ENCODE measurements at regions of chr18 and their contacts with region 1.

Region 1: DNA sequence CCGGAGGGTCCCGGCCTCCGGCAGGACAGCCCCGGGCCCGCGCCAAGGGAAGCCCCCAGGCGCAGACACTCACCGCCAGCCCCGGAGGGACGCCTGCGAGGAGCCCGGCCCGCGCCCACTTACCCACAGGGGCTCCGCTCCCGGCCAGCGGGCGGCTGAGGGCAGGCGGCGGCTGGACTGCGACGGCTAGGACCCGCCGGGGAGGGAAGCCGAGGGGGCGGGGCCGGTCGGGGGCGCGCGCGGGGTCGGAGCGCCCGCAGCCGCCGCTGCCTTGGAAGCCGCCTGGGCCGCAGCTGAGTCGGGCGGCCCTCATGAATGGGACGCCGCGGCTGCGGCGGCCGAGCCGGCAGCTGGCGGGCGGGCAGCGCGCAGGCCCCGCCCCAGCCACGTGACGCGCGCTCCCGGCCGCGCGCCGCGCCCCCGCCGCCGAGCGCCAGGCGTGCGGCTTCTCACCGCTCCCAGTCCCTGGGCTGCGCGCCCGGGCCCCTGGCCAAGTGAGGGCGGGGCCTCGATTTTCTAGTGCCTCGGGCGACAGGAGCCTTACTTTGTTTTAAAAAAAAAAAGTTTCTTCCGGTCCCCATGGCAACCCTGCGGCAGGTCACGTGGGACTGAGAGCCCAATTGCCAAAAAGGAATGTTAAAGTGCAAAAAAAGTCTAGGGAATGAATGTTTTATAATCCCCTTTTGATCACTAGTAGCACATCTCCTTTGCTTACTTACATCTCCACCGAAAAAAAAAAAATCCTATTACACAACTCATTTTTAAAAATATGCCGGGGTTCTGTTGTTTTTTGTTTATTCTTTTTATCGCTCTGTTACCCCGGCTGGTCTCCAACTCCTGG is at the start of gene LPIN2:
- DNase-seq: peak; percentile 91 to 97 (median 95)
- H3K4me3 ChIP-seq: peak within 1 kb of the TSS; percentile 54 to 94 (median 81)
- H3K27ac ChIP-seq: peak within 1 kb of the TSS; percentile 29 to 99 (median 92)
- H3K27me3 ChIP-seq: no peaks in the 10 kb centered on the region
- CTCF ChIP-seq: peak in 4 of 56 donors; percentile 3 to 28 (median 13)
- total RNA-seq, gene LPIN2: 37.1 to 95.3 (median 57.4) TPM

Region 2: DNA sequence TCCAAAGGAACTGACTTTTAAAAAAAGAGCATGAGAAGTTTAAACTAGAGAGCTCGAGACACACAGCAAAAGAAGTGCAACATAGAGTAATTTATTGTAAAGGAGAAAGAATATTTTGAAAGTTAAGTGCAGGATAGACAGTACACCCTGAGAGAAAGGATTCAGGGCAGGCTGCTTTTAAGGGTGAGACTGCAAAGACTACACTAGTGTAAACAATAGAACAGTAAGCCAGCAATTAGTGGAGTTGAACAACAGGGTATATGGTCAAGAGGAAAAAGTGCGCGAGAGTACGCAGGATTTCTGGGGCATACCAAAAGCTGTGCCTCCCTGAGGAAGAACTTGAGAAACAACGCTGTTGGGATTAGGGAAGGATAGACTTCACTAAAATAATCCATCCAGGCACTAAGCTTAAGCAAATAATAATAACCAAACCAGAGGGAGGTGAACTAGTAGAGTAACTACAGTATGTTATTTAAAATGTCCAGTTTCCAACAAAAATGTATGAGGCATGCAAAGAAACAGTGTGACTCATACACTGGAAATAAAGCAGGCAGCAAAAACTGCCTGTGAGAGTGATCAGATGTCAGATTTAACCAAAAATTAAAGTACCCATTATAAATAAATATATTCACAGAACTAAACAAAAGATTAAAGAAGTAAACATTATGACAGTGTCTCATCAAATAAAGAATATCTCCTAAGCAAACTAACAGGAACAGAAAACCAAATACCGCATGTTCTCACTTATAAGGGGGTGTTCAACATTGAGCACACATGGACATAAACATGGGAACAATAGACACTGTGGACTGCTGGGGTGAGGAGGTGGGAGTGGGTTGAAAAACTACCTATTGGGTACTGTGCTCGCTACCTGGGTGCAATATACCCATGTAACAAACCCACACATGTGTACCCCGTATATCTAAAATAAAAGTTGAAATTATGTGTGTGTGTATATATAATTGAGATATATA is 206.9 kb before region 1 on chr18:
- intact Hi-C with region 1: no loop called
- DNase-seq: no peak
- H3K4me3 ChIP-seq: no peak overlapping the region
- H3K27ac ChIP-seq: peak overlapping the region in 1 of 59 donors; percentile 11
- H3K27me3 ChIP-seq: no peaks in the 10 kb centered on the region
- CTCF ChIP-seq: no peak

Region 3: GRCh38 chr18:2932247-2933181 is 80.7 kb before region 1 on chr18:
- intact Hi-C with region 1: loop called in 1 of 2 experiments (anchors 10 kb)
- DNase-seq: peak in 1 of 10 donors; percentile 39
- H3K4me3 ChIP-seq: no peak overlapping the region
- H3K27ac ChIP-seq: peak overlapping the region in 2 of 59 donors; percentile 7 to 41
- H3K27me3 ChIP-seq: no peaks in the 10 kb centered on the region
- CTCF ChIP-seq: peak; percentile 72 to 94 (median 84)

Region 4: DNA sequence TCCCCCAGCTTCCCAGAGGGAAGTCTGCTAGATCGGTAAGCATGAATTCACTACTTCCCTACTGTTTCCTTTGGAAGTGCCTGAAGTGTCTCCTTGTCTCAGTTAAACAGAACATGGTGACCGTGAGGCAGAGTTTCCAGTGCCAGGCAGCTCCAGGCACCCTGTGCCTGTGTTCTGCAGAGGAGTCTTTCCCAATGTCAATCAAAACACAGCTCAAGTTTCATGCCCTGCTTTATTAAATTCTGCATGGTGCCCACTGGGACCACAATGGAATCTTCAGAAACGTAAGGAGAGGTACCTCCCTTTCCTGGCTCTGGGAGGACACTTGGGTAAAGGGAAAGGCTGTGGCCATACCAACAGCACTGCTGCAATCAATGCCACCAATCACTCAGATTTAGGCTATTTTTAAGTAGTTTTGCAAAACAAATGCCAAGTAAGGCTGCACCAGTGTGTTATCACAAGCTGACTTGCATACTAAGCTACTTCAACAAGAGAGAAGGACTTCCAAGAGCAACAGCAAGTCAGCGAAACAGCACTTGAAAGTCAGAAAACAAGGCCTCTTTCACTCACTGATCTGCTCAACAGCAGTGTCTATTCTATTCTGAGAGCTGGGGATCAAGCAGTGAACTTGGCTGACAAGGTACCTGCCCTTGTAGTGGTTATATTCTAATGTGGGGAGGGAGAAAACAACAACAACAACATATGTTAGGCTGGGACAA is 15.2 kb before region 1 on chr18:
- intact Hi-C with region 1: loop called in 1 of 2 experiments (anchors 2 kb)
- DNase-seq: no peak
- H3K4me3 ChIP-seq: peak overlapping the region in 12 of 59 donors; percentile 7 to 35 (median 17)
- H3K27ac ChIP-seq: peak overlapping the region; percentile 20 to 93 (median 81)
- H3K27me3 ChIP-seq: no peaks in the 10 kb centered on the region
- CTCF ChIP-seq: no peak

Region 5: GRCh38 chr18:3129053-3129864 is 116.1 kb after region 1 on chr18:
- intact Hi-C with region 1: loop called (anchors 5 to 10 kb)
- DNase-seq: peak; percentile 48 to 95 (median 85)
- H3K4me3 ChIP-seq: peak overlapping the region in 34 of 59 donors; percentile 2 to 55 (median 34)
- H3K27ac ChIP-seq: peak overlapping the region in 51 of 59 donors; percentile 7 to 90 (median 71)
- H3K27me3 ChIP-seq: no peaks in the 10 kb centered on the region
- CTCF ChIP-seq: peak; percentile 36 to 93 (median 78)

Region 6: DNA sequence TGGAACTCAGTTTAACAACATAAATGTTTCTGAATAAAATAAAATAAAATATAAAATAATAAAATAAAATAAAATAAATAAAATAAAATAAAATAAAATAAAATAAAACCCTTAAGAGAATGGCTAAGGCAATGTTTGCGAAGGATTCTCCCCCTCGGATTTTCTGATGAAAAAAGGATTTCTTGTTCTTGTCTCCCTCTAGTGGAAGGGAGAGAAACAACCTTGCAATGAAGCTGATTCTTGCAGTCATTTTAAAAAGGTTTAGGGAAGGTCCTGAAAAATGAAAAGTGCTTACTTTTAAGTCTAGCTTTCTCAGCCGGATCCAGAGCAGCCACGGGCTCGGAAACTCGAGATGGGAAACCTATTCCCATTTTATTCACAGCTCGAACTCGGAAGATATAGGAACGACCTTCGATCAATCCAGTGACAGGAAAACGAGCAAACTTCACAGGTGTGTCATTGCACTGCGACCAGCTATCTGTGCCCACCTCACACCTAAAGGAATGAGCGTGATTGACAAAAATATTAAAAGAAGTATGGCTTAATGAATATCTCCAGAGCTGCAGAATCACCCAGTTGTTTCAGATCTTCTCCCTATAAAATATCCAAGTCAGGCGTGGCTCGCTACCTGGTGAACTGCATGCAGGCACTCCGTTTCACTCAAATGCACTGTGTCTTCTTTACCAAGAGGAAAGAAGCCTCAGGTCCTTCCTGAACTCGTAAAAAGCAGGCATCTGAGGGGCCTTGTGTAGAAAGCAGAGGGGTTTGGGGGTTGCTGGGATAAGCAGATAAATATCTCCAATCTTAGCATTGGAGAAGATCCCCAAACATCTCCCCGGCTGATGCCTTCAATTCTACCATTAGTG is 138.4 kb after region 1 on chr18:
- intact Hi-C with region 1: loop called in 1 of 2 experiments (anchors 5 kb)
- DNase-seq: no peak
- H3K4me3 ChIP-seq: no peak overlapping the region
- H3K27ac ChIP-seq: no peak overlapping the region
- H3K27me3 ChIP-seq: no peaks in the 10 kb centered on the region
- CTCF ChIP-seq: peak; percentile 66 to 90 (median 82)